CD8-positive, alpha-beta memory T cell (primary cell): ENCODE measurements at regions of chr17 and their contacts with region 1.

Region 1: DNA sequence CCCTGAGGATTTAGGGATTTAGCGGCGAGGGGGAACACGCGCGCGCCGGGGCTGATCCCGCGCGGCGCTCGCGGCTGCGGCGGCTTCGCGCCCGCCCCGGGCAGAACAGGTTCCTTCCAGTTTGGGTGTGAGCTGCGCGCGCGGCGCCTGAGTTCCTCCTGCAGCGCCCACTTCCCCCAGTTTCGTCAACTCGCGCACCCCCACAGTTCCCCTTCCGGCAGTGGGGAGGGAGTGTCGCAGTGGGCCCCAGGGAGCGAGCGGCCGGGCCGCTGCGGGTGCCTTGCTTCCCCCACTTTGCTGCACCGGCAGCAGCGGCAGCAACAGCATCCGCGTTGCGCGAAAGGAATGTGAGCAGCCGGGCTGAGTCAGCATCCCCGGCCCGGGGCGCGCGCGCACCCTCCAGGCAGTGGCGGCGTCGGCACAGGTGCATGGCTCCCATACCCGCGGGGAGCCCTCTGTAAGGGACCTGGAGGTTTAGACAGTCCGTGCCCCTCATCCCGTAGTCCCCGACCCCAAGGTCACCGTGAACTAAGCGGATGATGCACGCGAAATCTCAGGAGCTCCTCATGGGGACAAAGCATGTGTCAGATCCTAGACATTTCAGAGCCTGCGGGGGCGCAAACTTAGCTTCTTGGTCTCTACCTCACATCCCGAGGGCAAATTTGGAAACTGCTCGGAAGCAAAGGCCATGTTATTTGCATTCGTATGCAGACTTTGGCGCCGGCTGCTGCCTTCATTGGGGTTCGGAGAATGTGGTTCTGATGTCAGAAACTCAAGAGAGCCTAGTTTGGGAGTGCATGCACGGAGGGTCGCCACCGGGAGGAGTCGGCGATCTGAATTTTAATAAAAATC is 775 bp downstream of the ARSG start:
- DNase-seq: peak; percentile 92 to 98 (median 97)
- H3K4me3 ChIP-seq: peak overlapping the region; percentile 68
- H3K4me3 Mint-ChIP-seq: peak overlapping the region; percentile 84 to 100 (median 85)
- H3K27ac ChIP-seq: peak overlapping the region; percentile 94
- H3K27ac Mint-ChIP-seq: peak overlapping the region; percentile 84 to 100 (median 94)
- H3K4me1 ChIP-seq: peaks cover 61% of the 10 kb centered on the region
- H3K4me1 Mint-ChIP-seq: peaks cover 55 to 83% (median 69%) of the 10 kb centered on the region in 3 donors
- H3K27me3 ChIP-seq: no peaks in the 10 kb centered on the region
- H3K27me3 Mint-ChIP-seq: no peaks in the 10 kb centered on the region

Region 2: GRCh38 chr17:68152161-68152571 is 139.9 kb before region 1 on chr17:
- CTCF ChIA-PET with region 1: no interaction called
- POLR2A ChIA-PET with region 1: no interaction called
- DNase-seq: no peak
- H3K4me3 ChIP-seq: no peak overlapping the region
- H3K4me3 Mint-ChIP-seq: no peak overlapping the region
- H3K27ac ChIP-seq: no peak overlapping the region
- H3K27ac Mint-ChIP-seq: no peak overlapping the region
- H3K4me1 ChIP-seq: no peaks in the 10 kb centered on the region
- H3K4me1 Mint-ChIP-seq: no peaks in the 10 kb centered on the region
- H3K27me3 ChIP-seq: no peaks in the 10 kb centered on the region
- H3K27me3 Mint-ChIP-seq: no peaks in the 10 kb centered on the region

Region 3: DNA sequence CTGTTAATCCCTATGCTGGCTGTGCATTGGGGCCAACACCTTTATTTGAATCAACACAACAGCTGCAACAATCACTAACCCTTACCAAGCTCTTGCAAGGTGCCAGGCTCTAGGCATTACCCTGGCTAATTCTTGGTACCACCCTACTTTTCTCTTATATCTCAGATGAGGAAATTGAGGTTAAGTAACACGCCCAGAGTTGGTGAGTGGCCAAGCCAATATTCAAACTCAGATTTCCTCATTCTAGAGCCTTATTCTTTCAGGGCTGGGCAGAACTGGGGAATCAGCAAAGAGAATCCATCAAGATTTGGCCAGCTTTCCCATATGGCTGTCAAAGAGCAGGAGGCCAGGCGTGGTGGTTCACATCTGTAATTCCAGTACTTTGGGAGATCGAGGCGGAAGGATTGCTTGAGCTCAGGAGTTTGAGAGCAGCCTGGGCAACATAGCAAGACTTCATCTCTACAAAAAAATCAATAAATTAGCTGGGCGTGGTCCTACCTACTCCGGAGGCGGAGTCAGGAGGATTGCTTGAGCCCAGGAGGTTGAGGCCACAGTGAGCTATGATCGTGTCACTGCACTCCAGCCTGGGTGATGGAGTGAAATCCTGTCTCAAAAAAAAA is 23.0 kb after region 1 on chr17:
- CTCF ChIA-PET with region 1: interaction called, 5 read pairs
- POLR2A ChIA-PET with region 1: interaction called, 11 read pairs
- DNase-seq: peak in 2 of 5 donors; percentile 30
- H3K4me3 ChIP-seq: peak overlapping the region; percentile 2
- H3K4me3 Mint-ChIP-seq: peak overlapping the region; percentile 1 to 90 (median 77)
- H3K27ac ChIP-seq: no peak overlapping the region
- H3K27ac Mint-ChIP-seq: peak overlapping the region; percentile 2 to 94 (median 69)
- H3K4me1 ChIP-seq: peaks cover 51% of the 10 kb centered on the region
- H3K4me1 Mint-ChIP-seq: peaks cover 55 to 88% (median 81%) of the 10 kb centered on the region in 3 donors
- H3K27me3 ChIP-seq: no peaks in the 10 kb centered on the region
- H3K27me3 Mint-ChIP-seq: no peaks in the 10 kb centered on the region

Region 4: GRCh38 chr17:68356520-68356919 is 64.5 kb after region 1 on chr17:
- CTCF ChIA-PET with region 1: interaction called, 5 read pairs
- POLR2A ChIA-PET with region 1: interaction called, 12 read pairs
- DNase-seq: peak; percentile 46 to 84 (median 82)
- H3K4me3 ChIP-seq: peak overlapping the region; percentile 5
- H3K4me3 Mint-ChIP-seq: peak overlapping the region; percentile 23 to 82 (median 70)
- H3K27ac ChIP-seq: no peak overlapping the region
- H3K27ac Mint-ChIP-seq: peak overlapping the region; percentile 55 to 96 (median 92)
- H3K4me1 ChIP-seq: peaks cover 60% of the 10 kb centered on the region
- H3K4me1 Mint-ChIP-seq: peaks cover 53 to 68% (median 68%) of the 10 kb centered on the region in 3 donors
- H3K27me3 ChIP-seq: no peaks in the 10 kb centered on the region
- H3K27me3 Mint-ChIP-seq: no peaks in the 10 kb centered on the region

Region 5: GRCh38 chr17:68420065-68420464 is 128.0 kb after region 1 on chr17:
- CTCF ChIA-PET with region 1: interaction called, 3 read pairs
- POLR2A ChIA-PET with region 1: interaction called, 12 read pairs
- DNase-seq: no peak
- H3K4me3 ChIP-seq: no peak overlapping the region
- H3K4me3 Mint-ChIP-seq: no peak overlapping the region
- H3K27ac ChIP-seq: no peak overlapping the region
- H3K27ac Mint-ChIP-seq: peak overlapping the region in 2 of 8 donors; percentile 32 to 36
- H3K4me1 ChIP-seq: no peaks in the 10 kb centered on the region
- H3K4me1 Mint-ChIP-seq: peaks cover 8 to 14% (median 12%) of the 10 kb centered on the region in 3 donors
- H3K27me3 ChIP-seq: no peaks in the 10 kb centered on the region
- H3K27me3 Mint-ChIP-seq: no peaks in the 10 kb centered on the region

Region 6: DNA sequence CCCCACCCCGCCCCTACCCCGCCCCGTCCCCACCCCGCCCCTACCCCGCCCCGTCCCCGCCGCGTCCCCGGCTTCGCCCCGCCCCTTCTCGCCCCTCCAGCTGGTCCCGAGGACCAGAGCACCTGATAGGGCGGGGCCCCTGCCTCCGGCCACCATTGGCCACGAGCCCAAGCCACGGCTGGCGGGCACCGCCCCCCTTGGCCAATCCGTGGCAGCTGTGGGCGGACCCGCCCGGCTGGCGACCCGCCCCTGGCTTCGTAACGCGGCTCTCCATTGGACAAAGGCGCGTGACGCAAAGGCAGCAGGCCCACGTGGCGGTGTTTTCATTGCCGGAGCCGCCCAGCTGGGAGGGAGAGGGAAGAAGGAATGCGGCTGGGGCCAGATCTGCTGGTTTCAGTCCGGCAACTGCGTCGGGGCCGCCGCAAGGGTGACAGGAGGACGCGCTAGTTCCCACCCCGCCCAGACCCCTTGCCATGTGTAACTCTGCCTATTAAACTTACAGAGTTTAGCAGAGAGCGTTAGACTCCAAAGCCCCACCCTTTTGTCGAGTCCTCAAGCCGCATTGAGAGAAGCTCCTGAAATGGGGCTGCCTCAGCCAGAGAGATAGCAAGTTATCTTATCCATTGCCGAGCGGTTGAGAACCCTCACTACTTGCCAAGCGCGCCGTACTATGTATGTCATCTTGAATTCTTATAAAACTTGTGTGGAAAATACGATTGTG is 165.6 kb after region 1 on chr17:
- CTCF ChIA-PET with region 1: interaction called, 9 read pairs
- POLR2A ChIA-PET with region 1: interaction called, 42 read pairs
- DNase-seq: peak; percentile 98 to 99 (median 99)
- H3K4me3 ChIP-seq: peak overlapping the region; percentile 69
- H3K4me3 Mint-ChIP-seq: peak overlapping the region; percentile 87 to 91 (median 89)
- H3K27ac ChIP-seq: peak overlapping the region; percentile 64
- H3K27ac Mint-ChIP-seq: peak overlapping the region; percentile 57 to 98 (median 93)
- H3K4me1 ChIP-seq: peaks cover 53% of the 10 kb centered on the region
- H3K4me1 Mint-ChIP-seq: peaks cover 60 to 68% (median 64%) of the 10 kb centered on the region in 3 donors
- H3K27me3 ChIP-seq: no peaks in the 10 kb centered on the region
- H3K27me3 Mint-ChIP-seq: no peaks in the 10 kb centered on the region

Region 7: DNA sequence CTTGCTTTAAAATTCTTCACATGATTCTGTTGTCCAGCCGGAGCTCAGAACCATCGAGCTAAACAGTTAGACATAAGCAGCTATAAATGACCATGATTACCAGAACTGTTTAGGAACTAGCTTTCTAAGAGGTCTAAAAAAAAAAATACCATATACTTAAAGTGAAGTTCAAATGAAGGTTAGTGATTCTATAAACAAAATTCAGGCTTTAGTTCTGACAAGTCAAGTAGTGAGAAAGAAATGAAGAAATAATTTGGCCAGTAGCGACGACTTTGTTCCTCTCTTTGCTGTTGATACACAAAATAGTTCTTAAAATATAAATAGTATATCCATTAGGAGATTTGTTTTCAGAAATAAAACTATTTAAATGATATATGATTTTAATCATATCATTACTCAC is 635.4 kb after region 1 on chr17:
- CTCF ChIA-PET with region 1: no interaction called
- POLR2A ChIA-PET with region 1: no interaction called
- DNase-seq: no peak
- H3K4me3 ChIP-seq: no peak overlapping the region
- H3K4me3 Mint-ChIP-seq: no peak overlapping the region
- H3K27ac ChIP-seq: no peak overlapping the region
- H3K27ac Mint-ChIP-seq: no peak overlapping the region
- H3K4me1 ChIP-seq: no peaks in the 10 kb centered on the region
- H3K4me1 Mint-ChIP-seq: no peaks in the 10 kb centered on the region
- H3K27me3 ChIP-seq: no peaks in the 10 kb centered on the region
- H3K27me3 Mint-ChIP-seq: peaks cover 2 to 4% of the 10 kb centered on the region in 2 donors